T-cell (primary cell): ENCODE measurements at regions of chr7 and their contacts with region 1.

Region 1: GRCh38 chr7:107879400-107880035 is 11.5 kb upstream of the DLD start:
- DNase-seq: peak in 14 of 35 experiments; percentile 16 to 70 (median 25)
- ATAC-seq: peak; percentile 64 to 78 (median 73)
- H3K4me3 ChIP-seq: no peak overlapping the region
- H3K4me3 Mint-ChIP-seq: no peak overlapping the region
- H3K27ac ChIP-seq: no peak overlapping the region
- H3K27ac Mint-ChIP-seq: no peak overlapping the region
- H3K4me1 ChIP-seq: peaks cover 4 to 6% of the 10 kb centered on the region in 2 experiments
- H3K4me1 Mint-ChIP-seq: peaks cover 3 to 30% (median 27%) of the 10 kb centered on the region in 3 donors
- H3K27me3 ChIP-seq: peaks cover 0 to 8% of the 10 kb centered on the region in 2 experiments
- H3K27me3 Mint-ChIP-seq: peaks cover 3 to 6% of the 10 kb centered on the region in 2 donors

Region 2: DNA sequence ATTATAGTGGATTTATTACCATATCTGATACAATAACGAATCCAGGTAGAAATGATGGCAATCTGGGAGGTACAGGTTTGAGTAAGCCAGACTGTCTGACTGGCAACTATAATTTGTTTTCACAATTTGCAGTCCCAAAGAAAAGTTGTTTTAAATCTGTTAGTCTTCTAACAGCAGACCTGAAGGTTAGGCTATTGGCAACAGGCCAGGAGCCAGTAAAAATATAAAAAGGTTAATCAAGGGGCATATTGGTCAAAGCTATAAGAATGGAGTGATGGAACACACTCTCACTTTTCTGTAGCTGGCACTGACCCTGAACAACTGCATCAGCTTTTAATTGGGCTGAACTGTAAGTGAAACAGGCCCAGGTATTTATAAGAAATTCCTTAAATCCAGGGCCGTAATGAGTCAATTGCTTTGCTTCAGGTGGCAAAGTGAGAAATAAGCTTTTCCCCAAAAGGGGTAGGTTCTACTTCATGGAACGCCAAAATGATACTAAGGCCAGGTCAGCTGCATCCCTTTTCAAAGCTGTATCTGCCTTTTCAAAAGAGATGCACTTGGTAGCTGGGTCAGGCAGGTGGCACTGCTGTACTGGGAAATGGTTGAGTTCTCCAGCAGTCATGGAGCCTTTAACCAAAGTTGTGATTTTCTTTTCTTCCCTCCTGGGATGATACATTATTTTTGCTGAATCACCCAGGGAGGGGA is 416.6 kb before region 1 on chr7:
- CTCF ChIA-PET with region 1: interaction called, 9 to 16 read pairs
- POLR2A ChIA-PET with region 1: no interaction called
- DNase-seq: peak in 34 of 35 experiments; percentile 9 to 73 (median 36)
- ATAC-seq: peak; percentile 43 to 77 (median 68)
- H3K4me3 ChIP-seq: no peak overlapping the region
- H3K4me3 Mint-ChIP-seq: no peak overlapping the region
- H3K27ac ChIP-seq: no peak overlapping the region
- H3K27ac Mint-ChIP-seq: peak overlapping the region in 1 of 2 donors; percentile 34
- H3K4me1 ChIP-seq: no peaks in the 10 kb centered on the region
- H3K4me1 Mint-ChIP-seq: peaks cover 0 to 5% (median 5%) of the 10 kb centered on the region in 3 donors
- H3K27me3 ChIP-seq: no peaks in the 10 kb centered on the region
- H3K27me3 Mint-ChIP-seq: no peaks in the 10 kb centered on the region

Region 3: GRCh38 chr7:107678110-107678753 is 201.3 kb before region 1 on chr7:
- CTCF ChIA-PET with region 1: no interaction called
- POLR2A ChIA-PET with region 1: interaction called in 1 of 2 experiments, 10 read pairs
- DNase-seq: no peak
- ATAC-seq: peak in 1 of 4 experiments; percentile 55
- H3K4me3 ChIP-seq: no peak overlapping the region
- H3K4me3 Mint-ChIP-seq: no peak overlapping the region
- H3K27ac ChIP-seq: peak overlapping the region; percentile 42
- H3K27ac Mint-ChIP-seq: peak overlapping the region; percentile 60 to 68
- H3K4me1 ChIP-seq: peaks cover 0 to 2% of the 10 kb centered on the region in 2 experiments
- H3K4me1 Mint-ChIP-seq: peaks cover 11 to 15% (median 14%) of the 10 kb centered on the region in 3 donors
- H3K27me3 ChIP-seq: no peaks in the 10 kb centered on the region
- H3K27me3 Mint-ChIP-seq: no peaks in the 10 kb centered on the region

Region 4: GRCh38 chr7:107743567-107744344 is 135.8 kb before region 1 on chr7 and contains the start of gene CBLL1:
- CTCF ChIA-PET with region 1: interaction called, 20 to 75 read pairs
- POLR2A ChIA-PET with region 1: interaction called, 3 to 9 read pairs
- DNase-seq: peak; percentile 95 to 99 (median 97)
- ATAC-seq: peak; percentile 92 to 96 (median 92)
- H3K4me3 ChIP-seq: peak within 1 kb of the TSS; percentile 78 to 99
- H3K4me3 Mint-ChIP-seq: peak within 1 kb of the TSS; percentile 94 to 97 (median 96)
- H3K27ac ChIP-seq: peak within 1 kb of the TSS; percentile 100
- H3K27ac Mint-ChIP-seq: peak within 1 kb of the TSS; percentile 100
- H3K4me1 ChIP-seq: peaks cover 22 to 37% of the 10 kb centered on the region in 2 experiments
- H3K4me1 Mint-ChIP-seq: peaks cover 52 to 55% (median 55%) of the 10 kb centered on the region in 3 donors
- H3K27me3 ChIP-seq: no peaks in the 10 kb centered on the region
- H3K27me3 Mint-ChIP-seq: no peaks in the 10 kb centered on the region
- total RNA-seq, gene CBLL1: 50.5 to 70.1 (median 61.6) TPM

Region 5: GRCh38 chr7:107890962-107891635 is 11.6 kb after region 1 on chr7 and contains the start of gene DLD:
- CTCF ChIA-PET with region 1: interaction called, 11 to 30 read pairs
- POLR2A ChIA-PET with region 1: interaction called, 4 to 8 read pairs
- DNase-seq: peak; percentile 84 to 97 (median 93)
- ATAC-seq: peak; percentile 97 to 99 (median 99)
- H3K4me3 ChIP-seq: peak within 1 kb of the TSS; percentile 77 to 90
- H3K4me3 Mint-ChIP-seq: peak within 1 kb of the TSS; percentile 96 to 98 (median 98)
- H3K27ac ChIP-seq: peak within 1 kb of the TSS; percentile 95
- H3K27ac Mint-ChIP-seq: peak within 1 kb of the TSS; percentile 94 to 98
- H3K4me1 ChIP-seq: peaks cover 18 to 24% of the 10 kb centered on the region in 2 experiments
- H3K4me1 Mint-ChIP-seq: peaks cover 49 to 52% (median 49%) of the 10 kb centered on the region in 3 donors
- H3K27me3 ChIP-seq: no peaks in the 10 kb centered on the region
- H3K27me3 Mint-ChIP-seq: no peaks in the 10 kb centered on the region
- total RNA-seq, gene DLD: 32.3 to 63.6 (median 41.9) TPM